ENCODE measurements at regions of chr7 and their contacts with region 1.

Region 1: DNA sequence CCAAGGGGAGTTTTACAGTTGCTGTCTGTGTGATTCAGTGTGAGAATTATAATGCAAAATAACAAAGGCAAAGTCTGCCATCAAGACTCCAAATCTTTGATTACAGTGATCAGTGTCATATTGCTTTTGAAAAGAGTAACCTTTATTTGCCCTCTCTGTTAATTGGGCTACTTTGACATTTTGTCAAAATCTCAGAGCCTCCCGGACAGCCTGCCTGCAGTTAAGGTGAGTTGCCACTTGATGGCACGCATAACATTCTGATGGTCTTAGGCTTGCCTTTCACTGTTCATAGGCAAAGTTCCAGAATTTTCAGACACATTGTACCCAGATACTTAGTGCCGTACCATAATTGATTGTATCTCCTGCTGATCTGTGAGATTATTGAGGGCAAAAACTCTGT is 253.5 kb downstream of the ABCA13 start:
- DNase-seq: peak; percentile 23
- ATAC-seq: peak; percentile 76
- H3K4me3 ChIP-seq: no peak overlapping the region
- H3K27ac ChIP-seq: no peak overlapping the region
- H3K4me1 ChIP-seq: no peaks in the 10 kb centered on the region
- H3K27me3 ChIP-seq: no peaks in the 10 kb centered on the region
- CTCF ChIP-seq: peak; percentile 69
- EP300 ChIP-seq: no peak
- POLR2A ChIP-seq: no peak
- RAD21 ChIP-seq: peak; percentile 38; the same call in 1 of the 2 replicates

Region 2: GRCh38 chr7:48389977-48390376 is 34.8 kb before region 1 on chr7:
- CTCF ChIA-PET with region 1: no interaction called
- POLR2A ChIA-PET with region 1: no interaction called
- in situ Hi-C with region 1: no loop called
- intact Hi-C with region 1: no loop called
- DNase-seq: no peak
- ATAC-seq: no peak
- H3K4me3 ChIP-seq: no peak overlapping the region
- H3K27ac ChIP-seq: no peak overlapping the region
- H3K4me1 ChIP-seq: no peaks in the 10 kb centered on the region
- H3K27me3 ChIP-seq: no peaks in the 10 kb centered on the region
- CTCF ChIP-seq: no peak
- EP300 ChIP-seq: no peak
- POLR2A ChIP-seq: no peak
- RAD21 ChIP-seq: no peak

Region 3: GRCh38 chr7:48875045-48875916 is 450.6 kb after region 1 on chr7:
- CTCF ChIA-PET with region 1: no interaction called
- POLR2A ChIA-PET with region 1: no interaction called
- in situ Hi-C with region 1: no loop called
- intact Hi-C with region 1: loop called (anchors 1 kb)
- DNase-seq: peak; percentile 15
- ATAC-seq: peak; percentile 99
- H3K4me3 ChIP-seq: no peak overlapping the region
- H3K27ac ChIP-seq: no peak overlapping the region
- H3K4me1 ChIP-seq: no peaks in the 10 kb centered on the region
- H3K27me3 ChIP-seq: no peaks in the 10 kb centered on the region
- CTCF ChIP-seq: peak; percentile 73
- EP300 ChIP-seq: no peak
- POLR2A ChIP-seq: no peak
- RAD21 ChIP-seq: peak; percentile 54; the same call in 1 of the 2 replicates

Region 4: DNA sequence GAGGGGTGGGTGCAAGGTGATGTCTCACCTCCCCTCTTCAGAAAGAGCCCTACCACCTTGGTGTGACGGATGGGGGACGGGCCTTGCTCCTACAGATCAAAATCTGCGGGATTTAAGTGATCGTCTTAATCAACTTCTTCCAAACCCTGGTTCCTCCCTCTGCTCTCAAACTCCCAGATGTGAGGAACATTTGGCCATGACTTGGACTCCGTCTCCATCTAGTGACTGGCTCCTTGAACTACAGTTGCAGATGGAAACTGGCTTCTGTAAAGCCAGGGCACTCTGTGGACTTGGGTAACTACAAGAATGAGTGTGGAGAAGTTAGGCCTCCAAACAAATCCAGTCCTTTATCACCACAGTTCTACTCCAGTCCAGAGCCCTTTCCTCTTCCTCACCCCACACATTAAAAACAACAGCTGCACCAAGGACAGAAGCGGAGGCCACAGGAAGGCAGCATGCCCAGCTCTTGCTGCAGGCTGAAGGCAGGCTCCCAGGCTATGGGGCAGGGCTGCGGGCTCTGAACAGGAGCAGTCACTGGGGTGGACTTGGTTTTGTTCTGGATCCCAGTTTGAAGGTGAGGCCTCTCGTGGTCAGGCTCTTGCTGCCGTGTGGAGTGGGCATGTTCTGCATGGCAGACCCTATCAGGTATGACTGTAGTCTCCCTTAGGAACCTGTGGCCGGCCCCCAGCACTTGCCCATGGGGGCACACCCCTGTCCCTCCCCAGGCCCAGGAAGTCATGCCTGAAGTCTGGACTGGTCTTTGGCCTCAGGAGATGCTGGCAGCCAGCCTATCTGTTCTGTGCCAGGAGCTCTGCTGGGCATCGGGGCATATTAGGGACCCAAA is 1428.1 kb after region 1 on chr7:
- CTCF ChIA-PET with region 1: no interaction called
- POLR2A ChIA-PET with region 1: no interaction called
- in situ Hi-C with region 1: no loop called
- intact Hi-C with region 1: loop called (anchors 2 kb)
- DNase-seq: peak; percentile 39
- ATAC-seq: peak; percentile 88
- H3K4me3 ChIP-seq: no peak overlapping the region
- H3K27ac ChIP-seq: no peak overlapping the region
- H3K4me1 ChIP-seq: no peaks in the 10 kb centered on the region
- H3K27me3 ChIP-seq: no peaks in the 10 kb centered on the region; a peak in 1 of 5 replicates
- CTCF ChIP-seq: peak; percentile 87
- EP300 ChIP-seq: no peak
- POLR2A ChIP-seq: no peak
- RAD21 ChIP-seq: peak; percentile 55

Measured in HepG2 (cell line).